ENCODE measurements at regions of chr1 and their contacts with region 1.

Region 1: DNA sequence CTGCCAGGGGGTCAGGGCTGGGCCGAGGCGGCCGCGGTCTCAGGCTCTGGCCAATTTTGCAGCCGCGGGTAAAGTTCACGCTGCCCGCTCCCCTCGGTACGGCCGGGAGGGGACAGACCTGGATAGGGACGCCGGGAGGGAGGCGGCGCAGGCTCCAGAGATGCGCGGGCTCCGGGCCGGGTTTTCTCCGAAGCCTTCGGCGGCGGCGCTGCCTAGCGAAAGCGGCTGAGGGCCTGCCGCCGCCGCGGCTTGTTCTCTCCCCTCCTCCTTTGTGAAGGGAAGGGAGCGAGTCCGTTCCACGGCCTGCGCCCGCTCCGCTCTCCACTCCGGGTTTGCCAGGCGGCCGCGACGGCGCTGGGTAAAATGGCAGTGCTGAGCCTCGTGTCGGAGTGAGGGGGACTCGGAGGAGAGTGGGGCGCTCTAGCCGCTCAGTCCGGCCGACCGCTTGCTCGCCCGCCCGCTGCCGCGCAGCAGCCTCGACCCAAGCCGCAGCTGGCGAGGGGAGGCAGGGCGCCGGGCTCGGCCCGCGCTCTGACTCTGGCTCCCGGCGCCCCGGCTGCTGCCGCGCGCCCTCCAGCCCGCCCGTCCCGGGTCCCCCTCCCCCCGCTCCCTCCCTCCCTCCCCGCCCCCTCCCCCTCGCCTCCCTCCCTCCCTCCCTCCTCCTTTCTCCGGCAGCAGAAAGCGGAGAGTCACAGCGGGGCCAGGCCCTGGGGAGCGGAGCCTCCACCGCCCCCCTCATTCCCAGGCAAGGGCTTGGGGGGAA is at the start of gene ARID1A:
- DNase-seq: peak; percentile 95
- ATAC-seq: peak; percentile 57
- H3K4me3 Mint-ChIP-seq: peak within 1 kb of the TSS; percentile 87
- H3K27ac Mint-ChIP-seq: peak within 1 kb of the TSS; percentile 98
- H3K4me1 Mint-ChIP-seq: peaks cover 22% of the 10 kb centered on the region
- H3K27me3 Mint-ChIP-seq: no peaks in the 10 kb centered on the region
- CTCF ChIP-seq: no peak
- total RNA-seq, gene ARID1A: 82.4 to 84.9 TPM

Region 2: DNA sequence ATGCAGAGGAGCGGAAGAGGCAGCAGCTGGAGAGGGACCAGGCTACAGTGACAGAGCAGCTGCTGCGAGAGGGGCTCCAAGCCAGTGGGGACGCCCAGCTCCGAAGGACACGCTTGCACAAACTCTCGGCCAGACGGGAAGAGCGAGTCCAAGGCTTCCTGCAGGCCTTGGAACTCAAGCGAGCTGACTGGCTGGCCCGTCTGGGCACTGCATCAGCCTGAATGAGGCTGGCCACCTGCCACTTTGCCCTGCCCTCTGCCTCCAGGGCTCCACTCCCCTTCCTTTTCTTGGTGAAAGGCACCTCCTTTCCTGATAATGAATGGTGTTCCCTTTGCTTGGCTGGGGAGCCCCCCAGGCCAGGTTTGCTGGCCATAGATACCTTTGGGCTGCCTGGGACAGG is 226.6 kb before region 1 on chr1:
- CTCF ChIA-PET with region 1: no interaction called
- POLR2A ChIA-PET with region 1: no interaction called
- intact Hi-C with region 1: no loop called
- DNase-seq: no peak
- ATAC-seq: no peak
- H3K4me3 Mint-ChIP-seq: no peak overlapping the region
- H3K27ac Mint-ChIP-seq: no peak overlapping the region
- H3K4me1 Mint-ChIP-seq: peaks cover 26% of the 10 kb centered on the region
- H3K27me3 Mint-ChIP-seq: no peaks in the 10 kb centered on the region
- CTCF ChIP-seq: no peak

Region 3: GRCh38 chr1:26677306-26678115 is 18.0 kb before region 1 on chr1:
- CTCF ChIA-PET with region 1: interaction called, 32 read pairs
- POLR2A ChIA-PET with region 1: interaction called, 18 read pairs
- intact Hi-C with region 1: no loop called
- DNase-seq: peak; percentile 75
- ATAC-seq: peak; percentile 100
- H3K4me3 Mint-ChIP-seq: peak overlapping the region; percentile 20
- H3K27ac Mint-ChIP-seq: peak overlapping the region; percentile 32
- H3K4me1 Mint-ChIP-seq: peaks cover 18% of the 10 kb centered on the region
- H3K27me3 Mint-ChIP-seq: no peaks in the 10 kb centered on the region
- CTCF ChIP-seq: peak; percentile 52

Region 4: DNA sequence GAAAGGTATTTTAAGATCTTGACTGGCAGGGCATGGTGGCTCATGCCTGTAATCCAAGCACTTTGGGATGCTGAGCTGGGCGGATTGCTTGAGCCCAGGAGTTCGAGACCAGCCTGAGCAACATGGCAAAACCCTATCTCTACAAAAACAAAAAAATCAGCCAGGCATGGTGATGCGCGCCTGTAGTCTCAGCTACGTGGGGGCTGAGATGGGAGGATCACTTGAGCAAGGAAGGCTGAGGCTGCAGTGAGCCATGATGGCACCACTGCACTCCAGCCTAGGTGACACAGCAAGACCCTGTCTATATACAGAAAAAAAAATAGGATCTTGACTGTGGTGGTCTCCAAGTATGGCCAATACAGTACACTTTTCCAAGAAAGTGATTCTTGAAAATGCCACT is 16.2 kb after region 1 on chr1:
- CTCF ChIA-PET with region 1: interaction called, 3 read pairs
- POLR2A ChIA-PET with region 1: interaction called, 46 read pairs
- intact Hi-C with region 1: no loop called
- DNase-seq: no peak
- ATAC-seq: no peak
- H3K4me3 Mint-ChIP-seq: no peak overlapping the region
- H3K27ac Mint-ChIP-seq: peak overlapping the region; percentile 57
- H3K4me1 Mint-ChIP-seq: peaks cover 75% of the 10 kb centered on the region
- H3K27me3 Mint-ChIP-seq: no peaks in the 10 kb centered on the region
- CTCF ChIP-seq: no peak

Region 5: DNA sequence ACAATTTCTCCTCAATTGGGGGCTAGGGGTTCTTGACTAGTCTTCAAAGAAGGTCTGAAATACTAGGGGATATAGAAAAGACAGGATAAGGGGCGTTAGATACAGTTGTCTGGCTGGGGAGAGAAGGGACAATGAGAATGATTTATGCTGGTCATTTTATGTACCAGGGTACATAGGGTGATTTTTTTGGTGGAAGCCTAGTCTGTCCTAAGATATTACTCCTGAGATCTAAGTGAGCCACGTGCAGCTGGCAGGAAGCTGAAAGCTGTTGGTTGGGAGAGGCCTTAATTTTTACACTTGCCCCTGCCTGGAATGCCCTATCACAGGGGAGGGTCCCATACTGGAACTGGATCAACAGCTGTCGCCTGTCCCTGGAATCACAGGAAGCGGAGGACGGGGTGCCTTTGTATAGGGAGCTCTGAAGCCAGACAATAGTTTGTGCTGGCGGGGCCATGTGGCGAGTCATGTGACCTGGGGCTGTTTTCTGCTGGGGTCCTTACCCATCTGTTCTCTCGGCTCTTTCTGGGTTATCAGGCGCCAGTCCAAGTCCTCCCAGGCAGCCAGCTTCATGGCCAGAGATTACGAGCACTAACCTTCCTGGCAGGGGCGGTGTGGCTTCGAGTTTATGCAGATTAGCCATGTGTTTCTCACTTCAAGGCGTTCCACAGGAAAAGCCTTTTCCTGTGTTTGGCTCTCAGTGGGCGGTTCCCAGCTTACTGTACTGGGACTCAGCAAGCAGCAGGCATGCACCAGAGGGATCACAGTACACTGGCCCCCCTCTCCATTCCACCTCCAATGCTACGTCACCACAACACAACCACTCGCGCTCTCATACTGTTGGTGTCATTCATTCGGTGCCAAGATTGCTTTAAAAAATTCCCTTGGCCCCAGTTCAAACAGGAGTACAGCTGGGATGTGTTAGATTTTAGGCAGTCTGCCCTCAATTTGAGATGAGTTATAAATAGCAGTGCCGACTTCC is 27.8 kb after region 1 on chr1:
- CTCF ChIA-PET with region 1: interaction called, 16 read pairs
- POLR2A ChIA-PET with region 1: interaction called, 123 read pairs
- intact Hi-C with region 1: no loop called
- DNase-seq: peak; percentile 40
- ATAC-seq: peak; percentile 36
- H3K4me3 Mint-ChIP-seq: peak overlapping the region; percentile 7
- H3K27ac Mint-ChIP-seq: peak overlapping the region; percentile 84
- H3K4me1 Mint-ChIP-seq: peaks cover 93% of the 10 kb centered on the region
- H3K27me3 Mint-ChIP-seq: no peaks in the 10 kb centered on the region
- CTCF ChIP-seq: no peak

Region 6: GRCh38 chr1:26744075-26744959 is 48.8 kb after region 1 on chr1:
- CTCF ChIA-PET with region 1: interaction called, 17 read pairs
- POLR2A ChIA-PET with region 1: interaction called, 80 read pairs
- intact Hi-C with region 1: no loop called
- DNase-seq: peak; percentile 92
- ATAC-seq: peak; percentile 95
- H3K4me3 Mint-ChIP-seq: peak overlapping the region; percentile 58
- H3K27ac Mint-ChIP-seq: peak overlapping the region; percentile 86
- H3K4me1 Mint-ChIP-seq: peaks cover 83% of the 10 kb centered on the region
- H3K27me3 Mint-ChIP-seq: no peaks in the 10 kb centered on the region
- CTCF ChIP-seq: no peak